ENCODE measurements at regions of chr1 and their contacts with region 1.

Region 1: GRCh38 chr1:226236826-226237225 is 13.4 kb downstream of the MIXL1 start:
- DNase-seq: no peak
- ATAC-seq: no peak
- H3K4me3 Mint-ChIP-seq: no peak overlapping the region
- H3K27ac Mint-ChIP-seq: no peak overlapping the region
- H3K4me1 Mint-ChIP-seq: peaks cover 9% of the 10 kb centered on the region
- H3K27me3 Mint-ChIP-seq: no peaks in the 10 kb centered on the region
- CTCF ChIP-seq: no peak

Region 2: DNA sequence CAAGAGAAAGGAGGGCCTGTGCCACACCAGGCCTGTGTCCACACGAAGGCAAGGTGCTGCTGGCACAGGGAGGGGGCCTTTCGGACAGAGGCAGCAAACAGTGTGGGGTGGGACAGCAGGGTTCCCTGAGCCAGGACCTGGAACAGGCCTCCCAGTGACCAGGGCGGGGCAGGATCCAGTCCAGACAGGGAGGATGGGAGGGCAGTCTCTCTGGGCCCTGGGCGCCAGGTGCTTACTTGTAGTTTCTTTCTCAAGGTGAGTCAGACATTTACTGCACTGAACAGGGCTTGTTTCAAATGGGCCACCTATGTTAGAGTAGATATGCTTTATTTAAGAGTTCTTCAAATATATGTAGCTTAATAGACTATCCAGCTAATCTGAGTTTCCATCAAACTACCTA is 258.9 kb after region 1 on chr1:
- CTCF ChIA-PET with region 1: no interaction called
- POLR2A ChIA-PET with region 1: interaction called, 11 read pairs
- intact Hi-C with region 1: no loop called
- DNase-seq: no peak
- ATAC-seq: no peak
- H3K4me3 Mint-ChIP-seq: no peak overlapping the region
- H3K27ac Mint-ChIP-seq: no peak overlapping the region
- H3K4me1 Mint-ChIP-seq: peaks cover 7% of the 10 kb centered on the region
- H3K27me3 Mint-ChIP-seq: peaks cover under 1% of the 10 kb centered on the region
- CTCF ChIP-seq: no peak